Activated CD4-positive, alpha-beta memory T cell treated with anti-CD3 and anti-CD28 coated beads for 36 hours (primary cell): ENCODE measurements at regions of chr9 and their contacts with region 1.

Region 1: GRCh38 chr9:99057665-99058625 is 47.0 kb upstream of the TGFBR1 start:
- DNase-seq: peak; percentile 90
- H3K4me3 Mint-ChIP-seq: peak overlapping the region; percentile 54
- H3K27ac Mint-ChIP-seq: peak overlapping the region; percentile 80
- H3K4me1 Mint-ChIP-seq: peaks cover 64% of the 10 kb centered on the region
- H3K27me3 Mint-ChIP-seq: no peaks in the 10 kb centered on the region

Region 2: DNA sequence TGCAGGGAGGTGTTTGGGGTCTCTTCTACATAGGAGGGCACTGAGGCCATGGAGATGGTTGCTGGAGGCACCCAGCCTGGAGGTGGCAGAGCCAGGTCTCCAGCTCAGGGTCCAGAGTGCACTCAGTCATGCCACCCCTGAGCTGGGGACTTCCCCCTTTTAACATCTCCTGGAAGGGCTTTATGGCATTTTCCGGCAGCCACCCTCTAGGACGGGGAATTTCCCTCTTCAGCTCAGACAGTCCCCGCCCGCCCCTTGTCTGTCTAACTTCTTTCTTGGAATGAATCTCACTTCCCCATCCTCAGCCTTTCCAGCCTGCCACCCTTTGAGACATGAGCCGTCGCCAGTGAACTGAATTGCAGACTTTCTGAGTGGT is 64.4 kb before region 1 on chr9:
- CTCF ChIA-PET with region 1: interaction called, 8 read pairs
- POLR2A ChIA-PET with region 1: interaction called, 3 read pairs
- intact Hi-C with region 1: loop called (anchors 1 kb)
- DNase-seq: peak; percentile 87
- H3K4me3 Mint-ChIP-seq: no peak overlapping the region
- H3K27ac Mint-ChIP-seq: peak overlapping the region; percentile 39
- H3K4me1 Mint-ChIP-seq: peaks cover 16% of the 10 kb centered on the region
- H3K27me3 Mint-ChIP-seq: peaks cover 8% of the 10 kb centered on the region

Region 3: DNA sequence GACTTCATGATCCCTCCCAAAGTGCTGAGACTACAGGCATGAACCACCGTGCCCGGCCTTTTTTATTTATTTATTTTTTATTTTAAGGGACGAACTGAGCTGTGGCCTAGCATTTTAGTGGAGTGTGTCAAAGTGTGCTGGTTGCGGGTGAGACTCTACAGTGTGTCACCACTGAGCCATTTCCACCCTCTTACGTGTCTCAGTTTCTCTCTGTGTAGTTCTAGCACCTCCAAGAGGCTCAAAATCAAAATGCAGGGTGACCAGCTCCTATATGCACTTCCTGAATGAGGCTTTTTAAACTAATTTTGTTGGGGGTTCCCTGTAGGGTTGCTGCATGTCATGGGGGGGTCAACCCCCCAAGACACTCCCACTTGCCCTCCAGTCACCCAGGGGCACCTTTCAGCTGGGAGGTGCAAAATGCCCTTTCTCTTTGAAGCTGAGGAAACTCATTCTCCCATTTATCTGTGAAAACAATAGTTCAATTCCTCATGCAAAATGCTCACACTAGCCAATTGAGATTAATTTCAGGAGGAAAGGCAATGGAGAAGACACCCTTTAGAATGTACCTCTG is 44.9 kb before region 1 on chr9:
- CTCF ChIA-PET with region 1: no interaction called
- POLR2A ChIA-PET with region 1: no interaction called
- intact Hi-C with region 1: loop called (anchors 5 kb)
- DNase-seq: peak; percentile 32
- H3K4me3 Mint-ChIP-seq: no peak overlapping the region
- H3K27ac Mint-ChIP-seq: peak overlapping the region; percentile 55
- H3K4me1 Mint-ChIP-seq: peaks cover 18% of the 10 kb centered on the region
- H3K27me3 Mint-ChIP-seq: no peaks in the 10 kb centered on the region

Region 4: GRCh38 chr9:99092643-99093491 is 34.9 kb after region 1 on chr9:
- CTCF ChIA-PET with region 1: interaction called, 4 read pairs
- POLR2A ChIA-PET with region 1: interaction called, 4 read pairs
- intact Hi-C with region 1: loop called (anchors 1 kb)
- DNase-seq: peak; percentile 74
- H3K4me3 Mint-ChIP-seq: peak overlapping the region; percentile 27
- H3K27ac Mint-ChIP-seq: peak overlapping the region; percentile 90
- H3K4me1 Mint-ChIP-seq: peaks cover 29% of the 10 kb centered on the region
- H3K27me3 Mint-ChIP-seq: no peaks in the 10 kb centered on the region

Region 5: GRCh38 chr9:99118782-99119466 is 61.0 kb after region 1 on chr9:
- CTCF ChIA-PET with region 1: interaction called, 3 read pairs
- POLR2A ChIA-PET with region 1: interaction called, 6 read pairs
- intact Hi-C with region 1: loop called (anchors 1 kb)
- DNase-seq: peak; percentile 75
- H3K4me3 Mint-ChIP-seq: peak overlapping the region; percentile 61
- H3K27ac Mint-ChIP-seq: peak overlapping the region; percentile 88
- H3K4me1 Mint-ChIP-seq: peaks cover 77% of the 10 kb centered on the region
- H3K27me3 Mint-ChIP-seq: no peaks in the 10 kb centered on the region

Region 6: GRCh38 chr9:99253772-99254431 is 196.0 kb after region 1 on chr9:
- CTCF ChIA-PET with region 1: no interaction called
- POLR2A ChIA-PET with region 1: no interaction called
- intact Hi-C with region 1: loop called (anchors 1 kb)
- DNase-seq: peak; percentile 95
- H3K4me3 Mint-ChIP-seq: peak overlapping the region; percentile 46
- H3K27ac Mint-ChIP-seq: peak overlapping the region; percentile 90
- H3K4me1 Mint-ChIP-seq: peaks cover 43% of the 10 kb centered on the region
- H3K27me3 Mint-ChIP-seq: peaks cover 8% of the 10 kb centered on the region

Region 7: GRCh38 chr9:100267211-100267610 is 1209.3 kb after region 1 on chr9:
- CTCF ChIA-PET with region 1: no interaction called
- POLR2A ChIA-PET with region 1: no interaction called
- intact Hi-C with region 1: no loop called
- DNase-seq: no peak
- H3K4me3 Mint-ChIP-seq: no peak overlapping the region
- H3K27ac Mint-ChIP-seq: no peak overlapping the region
- H3K4me1 Mint-ChIP-seq: no peaks in the 10 kb centered on the region
- H3K27me3 Mint-ChIP-seq: no peaks in the 10 kb centered on the region